Dorsolateral prefrontal cortex (tissue), 120 donors: ENCODE measurements at regions of chr2 and their contacts with region 1.

Region 1: GRCh38 chr2:88307817-88308216 is 137.7 kb downstream of the THNSL2 start:
- DNase-seq: no peak
- H3K4me3 ChIP-seq: no peak overlapping the region
- H3K27ac ChIP-seq: no peak overlapping the region
- H3K27me3 ChIP-seq: peaks cover 0 to 3% (median 0%) of the 10 kb centered on the region in 45 donors
- CTCF ChIP-seq: peak in 26 of 56 donors; percentile 10 to 38 (median 25)

Region 2: GRCh38 chr2:87995756-87996155 is 312.1 kb before region 1 on chr2:
- intact Hi-C with region 1: no loop called
- DNase-seq: no peak
- H3K4me3 ChIP-seq: no peak overlapping the region
- H3K27ac ChIP-seq: no peak overlapping the region
- H3K27me3 ChIP-seq: no peaks in the 10 kb centered on the region
- CTCF ChIP-seq: no peak

Region 3: DNA sequence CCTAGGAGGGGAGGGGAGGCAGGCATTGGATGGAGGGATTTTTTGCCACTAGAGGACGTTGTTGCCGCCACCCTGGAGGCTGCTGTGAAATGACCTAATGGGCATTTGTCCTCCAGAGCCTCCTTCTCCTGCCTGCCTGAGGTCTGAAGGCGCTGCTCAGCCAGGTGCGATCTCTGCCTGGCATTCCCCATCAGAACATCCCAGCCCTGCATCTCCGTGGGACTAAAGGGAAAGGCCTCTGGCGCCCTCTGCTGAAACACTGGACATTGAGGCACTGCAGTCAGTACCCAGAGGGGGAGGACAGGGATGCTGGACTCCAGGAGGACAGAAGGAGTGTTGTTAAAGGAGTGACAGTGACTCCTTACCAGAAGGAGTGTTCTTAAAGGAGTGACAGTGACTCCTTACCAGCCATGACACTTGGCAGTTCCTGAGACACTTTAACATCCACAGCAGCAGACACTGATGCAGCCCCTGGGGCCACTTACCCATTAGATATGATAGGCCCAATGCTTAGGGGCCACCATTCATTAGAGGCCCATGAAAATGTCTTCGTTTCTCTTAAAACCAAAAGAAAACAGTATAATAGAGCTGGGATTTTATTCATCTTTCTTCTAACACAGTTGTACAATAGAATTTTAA is 120.7 kb before region 1 on chr2:
- intact Hi-C with region 1: loop called in 1 of 2 experiments (anchors 10 kb)
- DNase-seq: peak; percentile 27 to 85 (median 80)
- H3K4me3 ChIP-seq: no peak overlapping the region
- H3K27ac ChIP-seq: no peak overlapping the region
- H3K27me3 ChIP-seq: peaks cover 0 to 10% (median 0%) of the 10 kb centered on the region in 45 donors
- CTCF ChIP-seq: peak; percentile 26 to 87 (median 77)